HCT116 (cell line): ENCODE measurements at regions of chr2 and their contacts with region 1.

Region 1: GRCh38 chr2:209423562-209424198 is at the start of gene MAP2:
- DNase-seq: peak; percentile 66
- ATAC-seq: peak; percentile 95
- H3K4me3 ChIP-seq: peak within 1 kb of the TSS; percentile 71 to 81
- H3K27ac ChIP-seq: peak within 1 kb of the TSS; percentile 2; the same call in 1 of the 2 replicates
- H3K4me1 ChIP-seq: peaks cover 10 to 26% of the 10 kb centered on the region in 2 experiments; a peak in 3 of 4 replicates
- H3K27me3 ChIP-seq: no peaks in the 10 kb centered on the region
- CTCF ChIP-seq: peak; percentile 66 to 98 (median 77)
- POLR2A ChIP-seq: peak; percentile 32
- RAD21 ChIP-seq: peak; percentile 62
- total RNA-seq, gene MAP2: 7.4 TPM

Region 2: DNA sequence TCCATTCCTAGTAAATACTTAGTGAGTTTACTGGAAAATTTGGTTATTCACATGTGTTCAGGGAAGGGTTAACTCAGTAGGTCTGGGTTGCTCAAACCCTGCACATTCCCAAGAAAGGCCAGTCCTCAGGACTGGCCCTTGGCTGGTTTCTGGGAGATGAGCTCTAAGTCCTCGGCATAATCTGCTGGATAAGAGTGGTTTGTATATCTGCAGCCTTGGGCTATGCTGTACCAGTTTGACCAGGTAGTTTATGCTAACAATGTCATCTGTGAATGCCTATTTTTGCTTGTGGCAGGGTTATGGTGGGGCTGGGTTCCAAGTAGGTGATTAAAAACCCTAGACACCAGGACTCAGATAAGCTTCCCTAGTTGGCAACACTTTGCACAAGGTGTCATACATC is 1024.5 kb before region 1 on chr2:
- CTCF ChIA-PET with region 1: interaction called, 4 read pairs
- POLR2A ChIA-PET with region 1: no interaction called
- RAD21 ChIA-PET with region 1: no interaction called
- intact Hi-C with region 1: loop called (anchors 5 kb)
- DNase-seq: no peak
- ATAC-seq: no peak
- H3K4me3 ChIP-seq: no peak overlapping the region
- H3K27ac ChIP-seq: no peak overlapping the region
- H3K4me1 ChIP-seq: no peaks in the 10 kb centered on the region
- H3K27me3 ChIP-seq: peaks cover 9% of the 10 kb centered on the region; the same call in 1 of the 2 replicates
- CTCF ChIP-seq: no peak
- POLR2A ChIP-seq: no peak
- RAD21 ChIP-seq: no peak

Region 3: GRCh38 chr2:209368900-209369299 is 54.8 kb before region 1 on chr2:
- CTCF ChIA-PET with region 1: interaction called, 15 read pairs
- POLR2A ChIA-PET with region 1: interaction called, 3 read pairs
- RAD21 ChIA-PET with region 1: no interaction called
- intact Hi-C with region 1: no loop called
- DNase-seq: peak; percentile 97
- ATAC-seq: peak; percentile 98
- H3K4me3 ChIP-seq: peak overlapping the region in 1 of 2 experiments; percentile 26; a peak in 2 of 4 replicates
- H3K27ac ChIP-seq: peak overlapping the region; percentile 31; the same call in 1 of the 2 replicates
- H3K4me1 ChIP-seq: peaks cover 8 to 22% of the 10 kb centered on the region in 2 experiments
- H3K27me3 ChIP-seq: no peaks in the 10 kb centered on the region
- CTCF ChIP-seq: no peak
- POLR2A ChIP-seq: no peak
- RAD21 ChIP-seq: peak; percentile 34; the same call in 1 of the 2 replicates

Region 4: GRCh38 chr2:209556354-209556961 is 132.8 kb after region 1 on chr2:
- CTCF ChIA-PET with region 1: interaction called, 23 read pairs
- POLR2A ChIA-PET with region 1: no interaction called
- RAD21 ChIA-PET with region 1: interaction called, 3 to 4 read pairs
- intact Hi-C with region 1: loop called (anchors 1 kb)
- DNase-seq: peak; percentile 27
- ATAC-seq: peak; percentile 92
- H3K4me3 ChIP-seq: no peak overlapping the region
- H3K27ac ChIP-seq: no peak overlapping the region
- H3K4me1 ChIP-seq: no peaks in the 10 kb centered on the region
- H3K27me3 ChIP-seq: no peaks in the 10 kb centered on the region
- CTCF ChIP-seq: peak; percentile 48 to 76 (median 58)
- POLR2A ChIP-seq: no peak
- RAD21 ChIP-seq: peak; percentile 85

Region 5: DNA sequence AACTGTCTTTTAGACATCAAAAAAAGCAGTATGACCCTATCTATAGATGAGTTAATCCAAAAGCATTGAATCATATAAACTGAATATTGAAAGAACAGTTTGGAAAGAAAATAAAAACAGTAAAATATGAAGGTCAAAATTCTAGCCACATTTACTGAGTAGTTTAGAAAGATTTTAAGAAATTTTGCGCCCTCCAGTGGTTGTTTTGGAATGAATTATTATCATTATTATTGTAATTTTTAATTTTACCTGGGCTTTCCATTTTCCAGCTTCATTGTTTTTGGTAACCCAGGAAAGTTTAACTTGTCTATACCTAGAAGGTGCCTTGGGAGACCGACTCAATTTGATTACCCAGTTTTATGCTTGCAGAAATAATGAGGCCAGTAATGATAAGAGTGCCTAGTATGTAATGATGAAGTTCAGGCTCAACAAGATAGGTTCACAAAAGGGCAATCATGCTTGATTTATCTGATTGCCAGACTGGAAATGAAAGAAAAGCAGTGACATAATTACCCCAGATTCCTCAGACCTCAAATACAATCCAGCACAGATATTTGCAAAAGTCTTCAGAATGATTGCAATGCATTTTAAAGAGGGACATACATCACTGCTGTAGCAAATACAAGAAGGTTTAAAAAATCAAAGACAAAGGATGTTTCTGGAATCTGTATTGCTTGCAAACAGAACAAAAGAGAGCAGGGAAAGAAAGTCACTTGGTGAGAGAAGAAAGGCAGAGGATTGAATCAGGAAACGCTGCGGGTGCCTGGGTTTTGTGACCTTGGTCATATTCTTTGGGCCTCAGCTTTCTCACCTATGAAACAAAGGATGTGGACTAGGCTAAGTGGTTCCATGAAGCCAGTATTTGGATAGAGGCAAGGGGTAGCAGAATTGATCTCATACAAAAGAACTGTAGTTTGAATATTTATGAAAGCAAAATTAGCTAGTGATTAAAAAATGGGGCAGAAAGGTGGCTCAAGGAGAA is 154.0 kb after region 1 on chr2:
- CTCF ChIA-PET with region 1: interaction called, 17 read pairs
- POLR2A ChIA-PET with region 1: no interaction called
- RAD21 ChIA-PET with region 1: no interaction called
- intact Hi-C with region 1: loop called (anchors 2 kb)
- DNase-seq: peak; percentile 6
- ATAC-seq: no peak
- H3K4me3 ChIP-seq: no peak overlapping the region
- H3K27ac ChIP-seq: no peak overlapping the region
- H3K4me1 ChIP-seq: no peaks in the 10 kb centered on the region
- H3K27me3 ChIP-seq: no peaks in the 10 kb centered on the region
- CTCF ChIP-seq: peak in 2 of 3 experiments; percentile 51 to 60; a peak in 3 of 6 replicates
- POLR2A ChIP-seq: no peak
- RAD21 ChIP-seq: peak; percentile 59

Region 6: GRCh38 chr2:209960676-209961630 is 537.3 kb after region 1 on chr2:
- CTCF ChIA-PET with region 1: interaction called, 16 read pairs
- POLR2A ChIA-PET with region 1: no interaction called
- RAD21 ChIA-PET with region 1: no interaction called
- intact Hi-C with region 1: loop called (anchors 5 kb)
- DNase-seq: peak; percentile 65
- ATAC-seq: peak; percentile 98
- H3K4me3 ChIP-seq: no peak overlapping the region
- H3K27ac ChIP-seq: no peak overlapping the region
- H3K4me1 ChIP-seq: peaks cover 0 to 5% of the 10 kb centered on the region in 2 experiments; a peak in 2 of 4 replicates
- H3K27me3 ChIP-seq: no peaks in the 10 kb centered on the region
- CTCF ChIP-seq: peak; percentile 65 to 77 (median 76)
- POLR2A ChIP-seq: no peak
- RAD21 ChIP-seq: peak; percentile 82

Region 7: DNA sequence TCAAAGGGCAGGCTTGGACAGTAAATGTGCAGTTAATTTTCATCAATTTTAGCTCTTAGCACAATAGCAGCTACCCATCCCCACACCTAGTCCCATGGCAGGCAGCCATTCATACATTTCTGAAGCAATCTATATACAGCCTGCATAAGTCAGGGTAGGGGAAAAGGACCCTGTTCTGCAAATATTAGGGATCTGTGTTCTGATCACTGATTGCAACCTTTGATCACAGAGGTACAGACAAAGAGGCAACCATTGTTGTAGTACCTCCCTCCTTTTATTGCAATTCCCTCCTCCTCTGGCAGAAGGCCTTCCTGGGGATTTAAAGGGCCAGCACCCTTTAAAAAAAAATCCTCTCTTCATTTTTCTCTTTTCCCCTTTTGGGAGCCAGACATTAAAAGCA is 689.2 kb after region 1 on chr2:
- CTCF ChIA-PET with region 1: no interaction called
- POLR2A ChIA-PET with region 1: no interaction called
- RAD21 ChIA-PET with region 1: no interaction called
- intact Hi-C with region 1: no loop called
- DNase-seq: no peak
- ATAC-seq: no peak
- H3K4me3 ChIP-seq: no peak overlapping the region
- H3K27ac ChIP-seq: no peak overlapping the region
- H3K4me1 ChIP-seq: no peaks in the 10 kb centered on the region
- H3K27me3 ChIP-seq: no peaks in the 10 kb centered on the region
- CTCF ChIP-seq: no peak
- POLR2A ChIP-seq: no peak
- RAD21 ChIP-seq: no peak

Region 8: GRCh38 chr2:210171309-210172203 is 747.9 kb after region 1 on chr2 and contains the start of gene KANSL1L:
- CTCF ChIA-PET with region 1: no interaction called
- POLR2A ChIA-PET with region 1: no interaction called
- RAD21 ChIA-PET with region 1: no interaction called
- intact Hi-C with region 1: loop called (anchors 5 kb)
- DNase-seq: peak; percentile 88
- ATAC-seq: peak; percentile 89
- H3K4me3 ChIP-seq: peak within 1 kb of the TSS; percentile 68 to 72
- H3K27ac ChIP-seq: peak within 1 kb of the TSS; percentile 82
- H3K4me1 ChIP-seq: peaks cover 21 to 43% of the 10 kb centered on the region in 2 experiments
- H3K27me3 ChIP-seq: no peaks in the 10 kb centered on the region
- CTCF ChIP-seq: no peak
- POLR2A ChIP-seq: no peak
- RAD21 ChIP-seq: no peak
- total RNA-seq, gene KANSL1L: 6.7 TPM